Endothelial cell of umbilical vein (primary cell): ENCODE measurements at regions of chr18 and their contacts with region 1.

Region 1: DNA sequence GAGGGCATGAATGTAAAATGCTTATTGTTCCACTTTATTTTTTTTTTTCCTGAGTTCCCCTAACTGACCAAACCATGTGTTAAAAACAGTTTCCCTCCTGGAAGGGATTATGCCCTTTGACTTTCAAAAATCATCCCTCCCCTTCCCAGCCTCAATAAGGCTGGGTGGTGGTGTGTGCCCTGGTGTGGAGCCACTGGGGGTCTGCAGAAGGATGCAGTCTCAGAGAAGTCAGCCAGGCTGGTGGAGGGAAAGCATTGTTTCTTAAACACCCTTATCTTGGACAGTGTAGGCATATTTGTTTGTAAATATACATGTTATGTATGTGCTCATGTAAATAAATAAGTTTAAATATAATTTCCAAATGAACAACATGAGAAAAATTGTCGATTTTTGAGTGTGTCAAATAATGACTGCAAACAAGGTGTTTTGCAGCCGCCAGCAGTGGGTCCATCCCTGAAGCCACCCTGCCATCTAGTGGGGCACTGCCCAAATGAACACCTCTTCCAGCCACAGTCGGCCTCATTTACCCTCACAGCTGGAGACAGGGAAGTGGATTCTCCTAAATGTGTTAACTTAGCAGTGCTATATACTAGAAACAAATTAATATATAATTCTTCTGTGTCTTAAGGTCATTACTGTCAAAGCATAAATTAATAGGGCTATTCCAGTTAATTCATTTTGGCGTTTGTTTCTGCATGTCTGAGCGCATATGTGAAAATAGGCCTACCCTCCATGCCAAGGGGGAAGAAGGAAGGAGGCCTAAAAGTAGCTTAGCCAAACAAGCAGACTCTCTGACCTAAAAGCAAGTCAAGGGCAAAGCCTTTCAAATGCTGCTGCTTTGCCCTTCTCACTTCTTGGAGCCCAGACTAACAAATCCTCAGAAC is 209.6 kb upstream of the PIK3C3 start:
- DNase-seq: peak; percentile 71
- H3K4me3 ChIP-seq: no peak overlapping the region
- H3K27ac ChIP-seq: no peak overlapping the region
- H3K4me1 ChIP-seq: peaks cover 2% of the 10 kb centered on the region
- H3K27me3 ChIP-seq: no peaks in the 10 kb centered on the region
- CTCF ChIP-seq: peak; percentile 64 to 78
- POLR2A ChIP-seq: no peak

Region 2: GRCh38 chr18:40159141-40160017 is 1586.0 kb before region 1 on chr18:
- CTCF ChIA-PET with region 1: no interaction called
- POLR2A ChIA-PET with region 1: no interaction called
- dilution Hi-C with region 1: no loop called
- intact Hi-C with region 1: loop called (anchors 10 kb)
- DNase-seq: peak; percentile 63
- H3K4me3 ChIP-seq: no peak overlapping the region
- H3K27ac ChIP-seq: no peak overlapping the region
- H3K4me1 ChIP-seq: peaks cover 6% of the 10 kb centered on the region
- H3K27me3 ChIP-seq: no peaks in the 10 kb centered on the region
- CTCF ChIP-seq: peak; percentile 44 to 63
- POLR2A ChIP-seq: no peak

Region 3: DNA sequence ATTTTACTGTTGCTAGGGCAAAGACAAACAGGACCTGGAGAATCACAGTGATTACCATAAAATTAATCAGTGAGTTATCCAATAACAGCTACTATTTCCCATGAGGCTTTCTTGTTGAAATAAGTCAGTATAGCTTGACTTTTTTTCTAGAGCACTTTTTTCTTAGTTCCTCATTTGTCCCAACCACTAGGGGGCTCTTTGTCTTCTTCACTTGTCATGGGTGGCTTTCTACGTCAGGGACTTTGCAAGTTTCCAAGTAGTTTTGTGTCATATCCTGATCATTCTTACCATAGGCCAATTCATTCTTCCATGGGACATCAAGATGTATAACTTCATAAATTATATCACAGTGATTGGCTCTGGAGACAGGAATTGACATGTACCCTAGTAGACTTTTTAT is 810.0 kb before region 1 on chr18:
- CTCF ChIA-PET with region 1: interaction called, 5 read pairs
- POLR2A ChIA-PET with region 1: no interaction called
- dilution Hi-C with region 1: no loop called
- intact Hi-C with region 1: loop called (anchors 2 kb)
- DNase-seq: peak; percentile 42
- H3K4me3 ChIP-seq: no peak overlapping the region
- H3K27ac ChIP-seq: no peak overlapping the region
- H3K4me1 ChIP-seq: no peaks in the 10 kb centered on the region
- H3K27me3 ChIP-seq: no peaks in the 10 kb centered on the region
- CTCF ChIP-seq: peak; percentile 14 to 37
- POLR2A ChIP-seq: no peak

Region 4: GRCh38 chr18:41553716-41554115 is 191.7 kb before region 1 on chr18:
- CTCF ChIA-PET with region 1: no interaction called
- POLR2A ChIA-PET with region 1: no interaction called
- dilution Hi-C with region 1: no loop called
- intact Hi-C with region 1: loop called (anchors 10 kb)
- DNase-seq: no peak
- H3K4me3 ChIP-seq: no peak overlapping the region
- H3K27ac ChIP-seq: no peak overlapping the region
- H3K4me1 ChIP-seq: no peaks in the 10 kb centered on the region
- H3K27me3 ChIP-seq: no peaks in the 10 kb centered on the region
- CTCF ChIP-seq: no peak
- POLR2A ChIP-seq: no peak

Region 5: DNA sequence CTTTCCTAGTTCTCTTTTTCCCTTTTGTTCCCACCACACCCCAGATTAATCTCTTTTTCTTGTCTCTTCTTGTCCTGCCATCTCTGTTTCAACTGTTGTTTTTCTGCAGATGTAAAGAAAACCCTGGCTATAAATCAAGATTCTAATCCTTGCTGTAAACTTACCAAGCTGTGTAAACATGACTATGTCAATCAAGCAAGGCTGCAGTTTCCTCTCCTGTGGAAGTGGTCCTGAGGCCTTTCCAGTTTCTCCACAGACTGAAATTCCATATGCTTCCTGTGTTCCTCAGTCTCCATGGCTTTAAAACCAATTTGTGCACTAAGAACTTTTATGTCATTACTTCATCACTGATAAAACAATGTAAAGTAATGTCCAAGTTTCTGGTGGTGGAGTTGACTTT is 79.2 kb before region 1 on chr18:
- CTCF ChIA-PET with region 1: no interaction called
- POLR2A ChIA-PET with region 1: no interaction called
- dilution Hi-C with region 1: no loop called
- intact Hi-C with region 1: loop called (anchors 2 kb)
- DNase-seq: peak; percentile 97
- H3K4me3 ChIP-seq: no peak overlapping the region
- H3K27ac ChIP-seq: peak overlapping the region; percentile 6
- H3K4me1 ChIP-seq: peaks cover 4% of the 10 kb centered on the region
- H3K27me3 ChIP-seq: no peaks in the 10 kb centered on the region
- CTCF ChIP-seq: no peak
- POLR2A ChIP-seq: no peak